Activated CD4-positive, alpha-beta memory T cell treated with anti-CD3 and anti-CD28 coated beads for 36 hours (primary cell): ENCODE measurements at regions of chr11 and their contacts with region 1.

Region 1: GRCh38 chr11:62855571-62856332 is 16.4 kb upstream of the WDR74 start:
- DNase-seq: peak; percentile 99
- H3K4me3 Mint-ChIP-seq: peak overlapping the region; percentile 95
- H3K27ac Mint-ChIP-seq: peak overlapping the region; percentile 94
- H3K4me1 Mint-ChIP-seq: peaks cover 57% of the 10 kb centered on the region
- H3K27me3 Mint-ChIP-seq: peaks cover 3% of the 10 kb centered on the region

Region 2: DNA sequence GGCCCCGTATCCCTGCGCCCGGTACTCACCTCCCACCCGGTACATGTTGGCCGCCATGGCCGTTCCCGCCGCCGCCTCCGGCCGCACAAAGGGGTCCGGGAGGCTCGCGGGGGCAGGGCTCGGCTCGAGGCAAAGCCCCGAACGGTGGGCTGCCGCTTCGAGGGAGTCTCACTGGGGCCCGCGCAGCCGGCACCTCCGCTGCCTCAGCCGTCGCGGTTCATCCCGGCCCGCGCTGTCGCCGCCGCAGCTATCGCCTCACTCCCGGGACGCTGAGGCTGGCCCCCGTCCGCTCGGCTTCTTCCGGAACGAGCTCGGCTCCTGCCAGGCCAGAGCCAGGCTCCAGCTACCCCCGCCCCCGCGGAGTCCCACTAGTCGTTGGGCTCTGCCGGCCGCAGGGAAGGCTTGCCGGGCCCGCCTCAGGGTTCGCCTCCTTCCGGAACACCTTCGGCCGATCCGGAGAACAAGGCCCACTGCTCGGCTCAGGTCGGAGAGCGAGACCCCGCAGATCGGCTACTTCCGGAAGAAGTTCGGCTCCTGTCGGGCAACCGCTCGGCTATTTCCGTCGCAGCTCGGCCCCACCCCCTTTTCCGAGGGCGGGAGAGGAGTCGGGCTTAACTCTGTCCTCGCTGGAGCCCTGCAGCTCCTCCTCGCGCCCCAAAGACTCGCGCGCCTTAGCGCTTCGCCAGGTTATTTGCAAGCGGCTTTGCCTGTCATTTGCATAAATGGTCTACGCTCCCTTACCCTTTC is 254.2 kb before region 1 on chr11 and contains the start of gene MTA2:
- CTCF ChIA-PET with region 1: no interaction called
- POLR2A ChIA-PET with region 1: interaction called, 16 read pairs
- intact Hi-C with region 1: no loop called
- DNase-seq: peak; percentile 100
- H3K4me3 Mint-ChIP-seq: peak within 1 kb of the TSS; percentile 81
- H3K27ac Mint-ChIP-seq: peak within 1 kb of the TSS; percentile 97
- H3K4me1 Mint-ChIP-seq: peaks cover 56% of the 10 kb centered on the region
- H3K27me3 Mint-ChIP-seq: no peaks in the 10 kb centered on the region
- total RNA-seq, gene MTA2: 166 to 167 TPM

Region 3: GRCh38 chr11:62671575-62672389 is 184.0 kb before region 1 on chr11 and contains the starts of genes LBHD1 and UQCC3:
- CTCF ChIA-PET with region 1: no interaction called
- POLR2A ChIA-PET with region 1: interaction called, 43 read pairs
- intact Hi-C with region 1: no loop called
- DNase-seq: peak; percentile 93
- H3K4me3 Mint-ChIP-seq: peak within 1 kb of the TSS; percentile 94
- H3K27ac Mint-ChIP-seq: peak within 1 kb of the TSS; percentile 98
- H3K4me1 Mint-ChIP-seq: peaks cover 55% of the 10 kb centered on the region
- H3K27me3 Mint-ChIP-seq: no peaks in the 10 kb centered on the region
- total RNA-seq, gene LBHD1: 10.8 to 14.1 TPM
- total RNA-seq, gene UQCC3: 6.0 to 6.2 TPM

Region 4: GRCh38 chr11:62726915-62727763 is 128.6 kb before region 1 on chr11 and contains the start of gene HNRNPUL2:
- CTCF ChIA-PET with region 1: interaction called, 4 read pairs
- POLR2A ChIA-PET with region 1: interaction called, 48 read pairs
- intact Hi-C with region 1: loop called (anchors 1 kb)
- DNase-seq: peak; percentile 99
- H3K4me3 Mint-ChIP-seq: peak within 1 kb of the TSS; percentile 99
- H3K27ac Mint-ChIP-seq: peak within 1 kb of the TSS; percentile 93
- H3K4me1 Mint-ChIP-seq: peaks cover 44% of the 10 kb centered on the region
- H3K27me3 Mint-ChIP-seq: no peaks in the 10 kb centered on the region
- total RNA-seq, gene HNRNPUL2: 56.0 to 62.3 TPM

Region 5: DNA sequence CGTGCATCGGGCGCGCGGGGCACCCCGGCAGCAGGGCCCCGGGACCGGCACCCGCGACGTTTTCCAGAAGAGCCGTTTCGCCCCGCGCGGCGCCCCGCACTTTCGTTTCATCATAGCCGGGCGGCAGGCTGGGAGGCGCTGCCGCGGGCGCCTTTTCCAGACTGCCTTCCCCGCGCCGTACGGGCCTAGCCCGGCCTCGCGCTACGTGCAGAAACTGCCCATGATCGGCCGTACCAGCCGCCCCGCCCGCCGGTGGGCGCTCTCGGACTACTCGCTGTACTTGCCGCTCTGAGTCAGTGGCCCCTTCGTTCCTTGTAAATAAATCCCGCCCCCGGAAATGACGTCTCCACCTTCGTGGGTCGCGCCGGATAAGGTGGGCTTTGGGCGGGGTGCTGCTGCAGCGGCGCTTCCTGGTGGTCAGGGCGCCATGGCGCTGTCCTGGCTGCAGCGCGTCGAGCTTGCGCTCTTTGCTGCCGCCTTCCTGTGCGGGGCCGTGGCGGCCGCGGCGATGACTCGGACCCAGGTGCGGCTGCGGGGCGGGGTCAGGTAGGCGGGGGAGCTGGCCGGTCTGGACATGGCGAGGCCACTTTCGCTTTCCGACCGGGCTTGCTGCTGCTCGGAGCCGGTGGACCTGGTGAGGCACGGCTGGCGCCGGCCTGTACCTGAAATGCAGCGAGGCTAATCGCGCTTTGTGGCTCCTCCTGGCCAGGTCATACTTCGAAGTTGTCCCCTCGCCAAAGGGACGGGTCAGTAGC is 68.6 kb before region 1 on chr11 and contains the start of gene TMEM179B:
- CTCF ChIA-PET with region 1: interaction called, 71 read pairs
- POLR2A ChIA-PET with region 1: interaction called, 38 read pairs
- intact Hi-C with region 1: loop called (anchors 1 kb)
- DNase-seq: peak; percentile 98
- H3K4me3 Mint-ChIP-seq: peak within 1 kb of the TSS; percentile 95
- H3K27ac Mint-ChIP-seq: peak within 1 kb of the TSS; percentile 93
- H3K4me1 Mint-ChIP-seq: peaks cover 39% of the 10 kb centered on the region
- H3K27me3 Mint-ChIP-seq: no peaks in the 10 kb centered on the region
- total RNA-seq, gene TMEM179B: 25.0 to 25.5 TPM

Region 6: DNA sequence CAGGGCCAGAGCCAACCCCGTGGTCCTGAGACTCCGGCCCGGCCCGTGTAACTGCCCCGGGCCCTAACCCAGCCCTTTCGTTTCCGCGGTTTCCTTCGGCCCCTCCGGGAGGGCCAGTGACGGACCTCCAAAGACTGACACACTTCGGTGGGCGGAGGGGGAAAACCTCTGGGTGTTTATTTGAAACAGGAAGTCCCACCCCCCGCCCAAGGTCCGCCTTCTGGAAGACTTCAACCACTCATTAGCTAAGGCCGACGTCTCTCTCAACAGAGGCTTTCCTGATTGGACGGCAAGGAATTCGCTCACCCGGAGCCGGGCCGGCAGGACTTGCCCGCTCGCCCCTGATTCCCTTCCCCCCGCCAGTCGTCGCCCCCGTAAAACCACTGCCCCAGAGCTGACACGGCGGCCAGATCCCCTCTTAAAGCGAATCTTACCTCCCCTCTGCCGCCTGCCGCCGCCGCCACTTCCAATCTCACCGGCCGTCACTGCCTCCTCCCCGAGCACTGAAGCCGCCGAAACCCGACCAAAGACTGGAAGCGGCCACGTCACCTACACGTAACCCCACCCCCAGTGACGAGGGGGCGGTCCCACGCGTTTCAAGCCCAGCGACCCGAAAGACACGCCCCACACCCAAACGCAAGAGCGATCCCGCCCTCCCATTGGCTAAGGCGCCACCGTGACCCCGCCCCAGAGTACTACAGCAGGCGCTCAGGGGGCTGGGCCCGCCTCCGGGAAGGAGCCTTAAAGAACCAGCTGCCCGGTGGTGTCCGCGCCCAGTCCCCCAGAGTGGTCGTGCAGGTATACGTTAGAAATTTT is 24.0 kb before region 1 on chr11 and contains the start of gene STX5:
- CTCF ChIA-PET with region 1: no interaction called
- POLR2A ChIA-PET with region 1: interaction called, 40 read pairs
- intact Hi-C with region 1: no loop called
- DNase-seq: peak; percentile 100
- H3K4me3 Mint-ChIP-seq: peak within 1 kb of the TSS; percentile 84
- H3K27ac Mint-ChIP-seq: peak within 1 kb of the TSS; percentile 93
- H3K4me1 Mint-ChIP-seq: peaks cover 42% of the 10 kb centered on the region
- H3K27me3 Mint-ChIP-seq: no peaks in the 10 kb centered on the region
- total RNA-seq, gene STX5: 24.6 to 29.2 TPM

Region 7: GRCh38 chr11:62880803-62881578 is 25.2 kb after region 1 on chr11 and contains the start of gene SLC3A2:
- CTCF ChIA-PET with region 1: interaction called, 31 read pairs
- POLR2A ChIA-PET with region 1: interaction called, 234 read pairs
- intact Hi-C with region 1: loop called (anchors 1 kb)
- DNase-seq: peak; percentile 92
- H3K4me3 Mint-ChIP-seq: peak within 1 kb of the TSS; percentile 99
- H3K27ac Mint-ChIP-seq: peak within 1 kb of the TSS; percentile 100
- H3K4me1 Mint-ChIP-seq: peaks cover 46% of the 10 kb centered on the region
- H3K27me3 Mint-ChIP-seq: no peaks in the 10 kb centered on the region
- total RNA-seq, gene SLC3A2: 309 to 314 TPM